Naive thymus-derived CD8-positive, alpha-beta T cell (primary cell): ENCODE measurements at regions of chr3 and their contacts with region 1.

Region 1: GRCh38 chr3:69051756-69052471 is at the start of gene TMF1:
- DNase-seq: peak; percentile 92 to 99 (median 98)
- ATAC-seq: peak; percentile 89
- H3K4me3 Mint-ChIP-seq: peak within 1 kb of the TSS; percentile 95 to 99 (median 98)
- H3K27ac Mint-ChIP-seq: peak within 1 kb of the TSS; percentile 90 to 99 (median 98)
- H3K4me1 Mint-ChIP-seq: peaks cover 22 to 55% (median 43%) of the 10 kb centered on the region in 4 donors
- H3K27me3 Mint-ChIP-seq: no peaks in the 10 kb centered on the region
- polyA plus RNA-seq, gene TMF1: 28.0 to 34.7 (median 34.6) TPM

Region 2: DNA sequence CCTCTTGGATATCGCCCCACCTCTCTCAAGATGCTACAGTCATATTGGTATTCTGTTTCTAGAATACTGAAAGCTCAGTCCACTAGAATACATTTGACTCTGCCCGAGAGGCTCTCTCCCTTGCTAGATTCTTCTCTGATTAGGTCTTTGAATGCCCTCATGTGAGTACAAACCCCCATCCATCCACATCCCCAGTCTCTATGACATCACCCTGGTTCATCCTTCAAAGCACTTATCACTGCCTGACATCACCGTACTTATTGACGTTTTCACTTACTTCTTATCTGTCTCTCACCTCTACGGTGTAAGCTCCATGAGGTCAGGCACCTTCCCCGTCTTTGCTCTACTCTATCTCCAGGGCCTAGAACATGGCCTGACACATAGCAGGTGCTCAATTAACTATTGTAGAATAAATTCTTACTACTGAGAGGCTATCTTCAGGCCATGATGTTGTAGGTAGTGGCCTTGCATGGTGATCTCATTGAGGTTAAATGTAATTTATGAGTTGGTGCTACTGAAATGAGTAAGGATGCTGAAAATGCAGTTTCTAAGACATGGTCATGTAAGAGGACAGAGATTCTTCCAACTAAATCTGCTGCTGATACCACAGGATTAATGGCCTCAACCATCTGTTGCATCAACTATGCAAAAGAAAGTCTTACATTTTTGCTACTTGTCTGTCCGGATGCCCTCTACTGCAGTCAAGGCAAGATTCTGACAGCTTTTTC is 65.3 kb before region 1 on chr3:
- POLR2A ChIA-PET with region 1: no interaction called
- DNase-seq: no peak
- ATAC-seq: no peak
- H3K4me3 Mint-ChIP-seq: no peak overlapping the region
- H3K27ac Mint-ChIP-seq: no peak overlapping the region
- H3K4me1 Mint-ChIP-seq: peaks cover 0 to 3% (median 0%) of the 10 kb centered on the region in 4 donors
- H3K27me3 Mint-ChIP-seq: no peaks in the 10 kb centered on the region

Region 3: GRCh38 chr3:69013253-69014021 is 38.5 kb before region 1 on chr3 and contains the start of gene EOGT:
- POLR2A ChIA-PET with region 1: interaction called, 10 read pairs
- DNase-seq: peak; percentile 56 to 86 (median 68)
- ATAC-seq: peak; percentile 78 to 86
- H3K4me3 Mint-ChIP-seq: peak within 1 kb of the TSS; percentile 80 to 93 (median 89)
- H3K27ac Mint-ChIP-seq: peak within 1 kb of the TSS; percentile 29 to 87 (median 82)
- H3K4me1 Mint-ChIP-seq: peaks cover 10 to 26% (median 19%) of the 10 kb centered on the region in 4 donors
- H3K27me3 Mint-ChIP-seq: no peaks in the 10 kb centered on the region
- polyA plus RNA-seq, gene EOGT: 5.0 to 5.7 (median 5.6) TPM

Region 4: DNA sequence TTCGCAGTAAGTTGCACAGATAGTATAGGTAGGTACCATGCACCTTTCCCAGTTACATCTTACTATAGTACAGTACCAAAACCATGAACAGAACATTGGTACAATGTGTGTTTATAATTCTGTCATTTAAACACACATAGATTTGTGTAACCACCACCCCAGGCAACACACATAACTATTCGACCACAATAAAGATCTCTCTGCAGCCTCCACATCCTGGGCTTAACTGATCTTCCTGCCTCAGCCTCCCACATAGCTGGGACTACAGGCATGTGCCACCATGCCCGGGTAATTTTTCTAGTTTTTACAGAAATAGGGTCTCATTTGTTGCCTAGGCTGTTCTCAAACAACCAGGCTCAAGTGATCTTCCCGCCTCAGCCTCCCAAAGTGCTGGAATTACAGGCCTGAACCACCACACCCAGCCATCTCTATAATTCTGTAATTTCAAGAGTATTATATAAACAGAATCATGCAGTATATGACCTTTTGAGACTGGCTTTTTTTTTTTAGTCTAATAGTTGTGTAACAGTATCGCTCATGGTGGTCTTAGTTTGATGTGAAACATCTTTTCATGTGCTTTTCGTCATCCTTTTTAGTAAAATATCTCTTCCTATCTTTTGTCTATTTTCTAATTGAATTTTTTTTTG is 13.5 kb after region 1 on chr3:
- POLR2A ChIA-PET with region 1: interaction called, 10 read pairs
- DNase-seq: peak in 2 of 10 donors; percentile 22 to 46
- ATAC-seq: peak; percentile 59 to 84
- H3K4me3 Mint-ChIP-seq: peak overlapping the region in 8 of 10 donors; percentile 43 to 59 (median 48)
- H3K27ac Mint-ChIP-seq: peak overlapping the region; percentile 78 to 94 (median 87)
- H3K4me1 Mint-ChIP-seq: peaks cover 13 to 35% (median 31%) of the 10 kb centered on the region in 4 donors
- H3K27me3 Mint-ChIP-seq: no peaks in the 10 kb centered on the region

Region 5: GRCh38 chr3:69084326-69085167 is 32.6 kb after region 1 on chr3 and contains the start of gene ARL6IP5:
- POLR2A ChIA-PET with region 1: interaction called, 63 read pairs
- DNase-seq: peak; percentile 81 to 95 (median 89)
- ATAC-seq: peak; percentile 72 to 77
- H3K4me3 Mint-ChIP-seq: peak within 1 kb of the TSS; percentile 93 to 99 (median 97)
- H3K27ac Mint-ChIP-seq: peak within 1 kb of the TSS; percentile 84 to 99 (median 98)
- H3K4me1 Mint-ChIP-seq: peaks cover 33 to 79% (median 60%) of the 10 kb centered on the region in 4 donors
- H3K27me3 Mint-ChIP-seq: no peaks in the 10 kb centered on the region
- polyA plus RNA-seq, gene ARL6IP5: 315 to 450 (median 375) TPM

Region 6: DNA sequence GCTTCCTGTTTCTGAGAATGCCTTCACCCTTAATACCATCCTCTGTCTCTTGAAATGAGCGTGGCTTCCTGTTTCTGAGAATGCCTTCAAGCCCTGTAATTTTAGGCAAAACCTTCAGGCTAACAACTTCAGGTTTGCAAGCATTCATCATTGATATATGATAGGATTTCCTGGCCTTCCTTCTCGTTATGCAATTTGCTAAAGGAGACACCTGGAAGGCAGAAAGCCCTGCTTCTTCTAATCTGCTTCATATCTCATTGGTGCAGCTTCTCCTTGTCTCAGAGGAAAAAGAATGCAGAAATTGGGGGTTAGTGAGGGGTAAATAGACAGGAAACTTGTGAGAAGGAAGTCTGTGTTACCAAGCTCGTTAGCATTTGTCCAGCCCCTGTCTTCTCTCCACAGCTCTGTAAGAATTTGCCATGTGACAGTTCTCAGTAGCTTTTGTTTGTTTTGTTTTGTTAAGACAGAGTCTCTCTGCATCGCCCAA is 40.2 kb after region 1 on chr3:
- POLR2A ChIA-PET with region 1: interaction called, 30 read pairs
- DNase-seq: peak in 5 of 10 donors; percentile 31 to 67 (median 58)
- ATAC-seq: peak; percentile 68 to 86
- H3K4me3 Mint-ChIP-seq: peak overlapping the region; percentile 63 to 93 (median 84)
- H3K27ac Mint-ChIP-seq: peak overlapping the region; percentile 89 to 98 (median 96)
- H3K4me1 Mint-ChIP-seq: peaks cover 40 to 97% (median 82%) of the 10 kb centered on the region in 4 donors
- H3K27me3 Mint-ChIP-seq: no peaks in the 10 kb centered on the region

Region 7: GRCh38 chr3:69214241-69214640 is 162.3 kb after region 1 on chr3:
- POLR2A ChIA-PET with region 1: no interaction called
- DNase-seq: no peak
- ATAC-seq: no peak
- H3K4me3 Mint-ChIP-seq: no peak overlapping the region
- H3K27ac Mint-ChIP-seq: peak overlapping the region in 1 of 10 donors; percentile 7
- H3K4me1 Mint-ChIP-seq: peaks cover 0 to 6% (median under 1%) of the 10 kb centered on the region in 4 donors
- H3K27me3 Mint-ChIP-seq: no peaks in the 10 kb centered on the region